RWPE1 (cell line): ENCODE measurements at regions of chr2 and their contacts with region 1.

Region 1: DNA sequence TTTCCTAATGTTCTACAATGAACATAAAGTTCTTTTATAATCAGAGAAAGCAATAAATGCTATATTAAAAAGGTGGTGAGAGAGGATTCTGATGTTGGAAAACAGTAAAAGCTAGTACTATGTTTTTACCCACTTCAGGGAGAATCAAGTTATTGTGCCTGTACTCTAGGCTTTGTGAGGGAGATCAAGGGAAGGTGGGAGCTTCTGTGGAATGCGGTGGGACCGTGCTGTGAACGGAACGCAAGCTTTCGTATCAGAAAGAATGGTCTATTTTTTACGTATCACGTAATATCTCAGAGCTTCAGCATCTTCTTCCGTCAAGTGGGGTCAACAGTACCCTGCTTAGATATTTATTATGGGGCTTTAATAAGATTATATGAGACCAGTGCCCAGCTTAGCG is 193.2 kb downstream of the CLIP4 start:
- DNase-seq: no peak
- H3K27ac ChIP-seq: no peak overlapping the region
- CTCF ChIP-seq: no peak

Region 2: GRCh38 chr2:27940090-27940671 is 1368.2 kb before region 1 on chr2:
- CTCF ChIA-PET with region 1: no interaction called
- POLR2A ChIA-PET with region 1: no interaction called
- DNase-seq: no peak
- H3K27ac ChIP-seq: no peak overlapping the region
- CTCF ChIP-seq: no peak

Region 3: GRCh38 chr2:29786361-29786760 is 478.0 kb after region 1 on chr2:
- CTCF ChIA-PET with region 1: interaction called, 12 read pairs
- POLR2A ChIA-PET with region 1: no interaction called
- DNase-seq: no peak
- H3K27ac ChIP-seq: no peak overlapping the region
- CTCF ChIP-seq: no peak